ENCODE measurements at regions of chr3 and their contacts with region 1.

Region 1: GRCh38 chr3:196198771-196199753 is 12.1 kb downstream of the ZDHHC19 start:
- DNase-seq: peak; percentile 26
- ATAC-seq: peak; percentile 47
- H3K4me3 ChIP-seq: peak overlapping the region in 1 of 3 experiments; percentile 19; a peak in 1 of 6 replicates
- H3K27ac ChIP-seq: no peak overlapping the region
- H3K4me1 ChIP-seq: peaks cover 46% of the 10 kb centered on the region
- H3K27me3 ChIP-seq: peaks cover 6 to 38% of the 10 kb centered on the region in 2 experiments; a peak in 3 of 5 replicates
- CTCF ChIP-seq: peak; percentile 63
- EP300 ChIP-seq: no peak
- POLR2A ChIP-seq: no peak
- RAD21 ChIP-seq: no peak

Region 2: GRCh38 chr3:196020373-196020772 is 178.7 kb before region 1 on chr3:
- CTCF ChIA-PET with region 1: interaction called, 15 read pairs
- POLR2A ChIA-PET with region 1: no interaction called
- in situ Hi-C with region 1: loop called (anchors 5 kb)
- intact Hi-C with region 1: loop called (anchors 1 kb)
- DNase-seq: no peak
- ATAC-seq: no peak
- H3K4me3 ChIP-seq: no peak overlapping the region
- H3K27ac ChIP-seq: no peak overlapping the region
- H3K4me1 ChIP-seq: no peaks in the 10 kb centered on the region
- H3K27me3 ChIP-seq: peaks cover 0 to 9% of the 10 kb centered on the region in 2 experiments; a peak in 1 of 5 replicates
- CTCF ChIP-seq: no peak
- EP300 ChIP-seq: no peak
- POLR2A ChIP-seq: no peak
- RAD21 ChIP-seq: no peak

Region 3: DNA sequence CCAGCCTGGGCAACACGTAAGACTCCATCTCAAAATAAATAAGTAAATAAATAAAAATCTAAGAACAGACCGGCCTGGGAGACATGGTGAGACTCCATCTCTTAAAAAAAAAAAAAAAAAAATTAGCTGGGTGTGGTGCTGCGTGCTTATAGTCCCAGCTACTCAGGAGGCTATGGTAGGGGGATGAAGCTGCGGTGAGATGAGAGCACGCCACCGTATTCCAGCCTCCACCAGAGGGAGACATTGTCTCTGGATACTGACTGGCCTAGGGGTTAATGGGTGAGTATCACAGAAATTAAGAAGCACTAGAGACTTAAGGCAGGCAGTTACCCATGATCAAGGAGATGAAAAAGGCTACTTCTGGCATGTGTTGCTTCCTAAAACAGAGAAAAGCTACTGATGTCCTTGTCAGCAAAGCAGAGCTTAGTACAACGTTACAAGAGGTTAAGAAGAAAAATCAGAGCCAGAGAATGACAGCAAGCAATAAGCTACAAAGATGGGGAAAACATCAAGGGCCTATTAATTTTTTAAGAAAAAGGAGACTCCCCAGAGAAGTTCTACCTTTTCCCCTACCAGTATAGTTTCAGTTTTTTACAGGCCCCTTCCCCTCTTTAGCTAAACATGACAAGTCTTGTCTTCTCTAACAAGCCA is 125.7 kb before region 1 on chr3:
- CTCF ChIA-PET with region 1: interaction called, 32 read pairs
- POLR2A ChIA-PET with region 1: interaction called, 6 read pairs
- in situ Hi-C with region 1: loop called (anchors 5 kb)
- intact Hi-C with region 1: loop called (anchors 1 kb)
- DNase-seq: peak; percentile 40
- ATAC-seq: peak; percentile 96
- H3K4me3 ChIP-seq: no peak overlapping the region
- H3K27ac ChIP-seq: no peak overlapping the region
- H3K4me1 ChIP-seq: peaks cover 10% of the 10 kb centered on the region; the same call in 1 of the 2 replicates
- H3K27me3 ChIP-seq: no peaks in the 10 kb centered on the region
- CTCF ChIP-seq: peak; percentile 78
- EP300 ChIP-seq: no peak
- POLR2A ChIP-seq: no peak
- RAD21 ChIP-seq: peak; percentile 62

Region 4: GRCh38 chr3:196079682-196080081 is 119.4 kb before region 1 on chr3:
- CTCF ChIA-PET with region 1: no interaction called
- POLR2A ChIA-PET with region 1: interaction called, 3 read pairs
- in situ Hi-C with region 1: loop called (anchors 5 kb)
- intact Hi-C with region 1: no loop called
- DNase-seq: no peak
- ATAC-seq: no peak
- H3K4me3 ChIP-seq: peak overlapping the region; percentile 94 to 97 (median 97)
- H3K27ac ChIP-seq: no peak overlapping the region
- H3K4me1 ChIP-seq: peaks cover 43% of the 10 kb centered on the region
- H3K27me3 ChIP-seq: no peaks in the 10 kb centered on the region; a peak in 1 of 5 replicates
- CTCF ChIP-seq: no peak
- EP300 ChIP-seq: no peak
- POLR2A ChIP-seq: no peak
- RAD21 ChIP-seq: no peak